Heart left ventricle (tissue), 16 donors: ENCODE measurements at regions of chr15 and their contacts with region 1.

Region 1: GRCh38 chr15:68053701-68054627 is at the start of gene PIAS1:
- DNase-seq: peak; percentile 93 to 98 (median 97)
- ATAC-seq: peak; percentile 97 to 99 (median 98)
- H3K4me3 ChIP-seq: peak within 1 kb of the TSS; percentile 66 to 99 (median 96)
- H3K27ac ChIP-seq: peak within 1 kb of the TSS; percentile 39 to 96 (median 91)
- H3K4me1 ChIP-seq: peaks cover 0 to 40% (median 31%) of the 10 kb centered on the region in 12 donors
- H3K27me3 ChIP-seq: no peaks in the 10 kb centered on the region
- CTCF ChIP-seq: peak in 4 of 12 donors; percentile 16 to 28 (median 24)
- POLR2A ChIP-seq: peak; percentile 44 to 90
- total RNA-seq, gene PIAS1: 28.7 to 37.8 (median 30.1) TPM

Region 2: GRCh38 chr15:67863442-67863987 is 190.4 kb before region 1 on chr15:
- intact Hi-C with region 1: loop called in 6 of 10 experiments (anchors 5 to 10 kb)
- DNase-seq: peak; percentile 71 to 93 (median 85)
- ATAC-seq: peak; percentile 86 to 98 (median 97)
- H3K4me3 ChIP-seq: peak overlapping the region in 11 of 12 donors; percentile 4 to 61 (median 53)
- H3K27ac ChIP-seq: peak overlapping the region in 6 of 12 donors; percentile 5 to 75 (median 38)
- H3K4me1 ChIP-seq: peaks cover 0 to 15% (median 10%) of the 10 kb centered on the region in 12 donors
- H3K27me3 ChIP-seq: peaks cover 0 to 2% (median 0%) of the 10 kb centered on the region in 9 donors
- CTCF ChIP-seq: peak; percentile 84 to 99 (median 94)
- POLR2A ChIP-seq: no peak

Region 3: GRCh38 chr15:67945951-67946700 is 107.8 kb before region 1 on chr15:
- intact Hi-C with region 1: loop called in 1 of 10 experiments (anchors 10 kb)
- DNase-seq: peak in 3 of 5 donors; percentile 36 to 46 (median 37)
- ATAC-seq: peak; percentile 11 to 70 (median 34)
- H3K4me3 ChIP-seq: no peak overlapping the region
- H3K27ac ChIP-seq: peak overlapping the region; percentile 2 to 84 (median 68)
- H3K4me1 ChIP-seq: peaks cover 0 to 40% (median 26%) of the 10 kb centered on the region in 12 donors
- H3K27me3 ChIP-seq: no peaks in the 10 kb centered on the region
- CTCF ChIP-seq: no peak
- POLR2A ChIP-seq: no peak

Region 4: DNA sequence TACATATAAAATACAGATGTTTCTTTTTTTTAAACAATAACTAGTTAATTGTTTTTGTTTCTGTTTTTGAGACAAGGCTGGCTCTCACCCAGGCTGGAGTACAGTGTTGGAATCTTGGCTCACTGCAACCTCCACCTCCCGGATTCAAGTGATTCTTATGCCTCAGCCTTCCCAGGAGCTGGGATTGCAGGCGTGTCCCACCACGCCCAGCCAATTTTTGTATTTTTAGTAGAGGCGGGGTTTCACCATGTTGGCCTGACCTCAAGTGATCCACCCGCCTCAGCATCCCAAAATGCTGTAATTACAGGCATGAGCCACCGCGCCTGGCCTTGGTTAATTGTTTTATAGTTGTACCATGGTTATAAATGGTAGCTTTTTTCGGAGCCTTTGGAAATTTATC is 72.4 kb after region 1 on chr15:
- intact Hi-C with region 1: loop called in 2 of 10 experiments (anchors 5 to 10 kb)
- DNase-seq: peak in 4 of 5 donors; percentile 54 to 68 (median 62)
- ATAC-seq: peak; percentile 74 to 88 (median 82)
- H3K4me3 ChIP-seq: no peak overlapping the region
- H3K27ac ChIP-seq: peak overlapping the region in 10 of 12 donors; percentile 6 to 56 (median 38)
- H3K4me1 ChIP-seq: peaks cover 0 to 57% (median 20%) of the 10 kb centered on the region in 12 donors
- H3K27me3 ChIP-seq: no peaks in the 10 kb centered on the region
- CTCF ChIP-seq: no peak
- POLR2A ChIP-seq: no peak

Region 5: DNA sequence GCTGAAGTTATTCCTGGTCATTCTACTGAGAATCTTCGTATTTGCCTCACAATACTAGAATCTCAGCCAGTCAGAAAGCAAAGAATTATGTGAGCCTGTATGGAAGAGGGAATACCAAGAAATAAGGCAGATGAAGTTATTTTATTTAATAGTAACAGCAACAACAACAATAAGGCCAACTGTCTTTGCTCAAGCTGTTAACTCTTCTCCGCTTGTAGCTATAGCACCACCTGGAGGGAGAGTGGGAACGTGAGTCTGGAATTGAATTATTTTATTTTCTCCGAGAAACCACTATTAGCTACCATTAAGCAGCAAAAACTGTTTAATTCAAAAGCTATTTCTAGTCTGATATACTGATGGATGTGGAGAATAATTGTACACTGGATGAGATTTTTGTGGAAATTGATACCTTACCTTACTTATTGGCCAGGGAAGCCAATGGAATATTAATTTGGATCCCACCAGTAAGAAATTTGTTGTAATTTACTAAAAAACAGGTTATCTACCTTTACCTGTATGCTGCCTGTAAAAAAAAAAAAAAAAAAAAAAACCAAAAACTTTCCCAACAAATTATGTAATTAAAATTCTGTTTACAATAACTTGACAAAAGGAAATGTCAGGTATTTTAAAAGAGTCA is 101.1 kb after region 1 on chr15:
- intact Hi-C with region 1: loop called in 6 of 10 experiments (anchors 1 to 10 kb)
- DNase-seq: peak in 3 of 5 donors; percentile 32 to 41 (median 38)
- ATAC-seq: peak in 3 of 4 donors; percentile 34 to 63 (median 58)
- H3K4me3 ChIP-seq: no peak overlapping the region
- H3K27ac ChIP-seq: no peak overlapping the region
- H3K4me1 ChIP-seq: peaks cover 0 to 11% (median 4%) of the 10 kb centered on the region in 12 donors
- H3K27me3 ChIP-seq: no peaks in the 10 kb centered on the region
- CTCF ChIP-seq: peak; percentile 56 to 90 (median 80)
- POLR2A ChIP-seq: no peak